K562 (cell line): ENCODE measurements at regions of chr19 and their contacts with region 1.

Region 1: DNA sequence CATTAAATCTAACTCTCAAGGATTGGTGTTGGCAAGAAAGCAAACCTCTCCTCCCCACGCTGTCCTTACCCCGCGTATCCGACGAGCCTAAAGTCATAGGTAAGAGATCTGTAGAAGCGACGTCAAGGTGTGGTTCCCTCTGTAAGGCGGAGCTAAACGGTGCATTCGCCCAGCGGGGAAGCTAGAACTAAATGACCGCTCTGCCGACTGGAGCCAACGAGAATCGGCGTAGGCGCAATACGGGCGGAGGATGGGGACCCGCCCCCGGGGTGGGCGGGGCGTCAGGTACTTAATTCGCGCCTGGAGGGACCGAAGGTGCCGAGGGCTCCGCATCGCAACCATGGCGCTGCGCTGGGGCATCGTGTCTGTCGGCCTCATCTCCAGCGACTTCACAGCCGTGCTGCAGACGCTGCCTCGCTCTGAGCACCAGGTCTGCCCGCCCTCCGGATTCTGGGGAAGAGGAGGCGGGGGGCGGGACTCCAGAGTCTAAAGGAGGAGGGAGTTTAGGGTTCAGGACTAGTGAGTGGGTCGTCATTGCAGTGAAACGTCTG is at the start of gene DHDH:
- DNase-seq: peak; percentile 91 to 96 (median 95)
- ATAC-seq: peak; percentile 97
- H3K4me3 ChIP-seq: peak within 1 kb of the TSS; percentile 38
- H3K27ac ChIP-seq: peak within 1 kb of the TSS; percentile 29; the same call in 2 of the 3 replicates
- H3K4me1 ChIP-seq: peaks cover 14 to 38% of the 10 kb centered on the region in 2 experiments; a peak in 4 of 5 replicates
- H3K27me3 ChIP-seq: no peaks in the 10 kb centered on the region
- CTCF ChIP-seq: no peak
- EP300 ChIP-seq: no peak
- POLR2A ChIP-seq: peak; percentile 63
- RAD21 ChIP-seq: no peak
- polyA plus RNA-seq, gene DHDH: 0.41 to 0.87 TPM

Region 2: GRCh38 chr19:48837051-48837524 is 96.4 kb before region 1 on chr19:
- CTCF ChIA-PET with region 1: no interaction called
- POLR2A ChIA-PET with region 1: no interaction called
- in situ Hi-C with region 1: no loop called
- intact Hi-C with region 1: no loop called
- DNase-seq: no peak
- ATAC-seq: no peak
- H3K4me3 ChIP-seq: no peak overlapping the region
- H3K27ac ChIP-seq: no peak overlapping the region
- H3K4me1 ChIP-seq: peaks cover 8 to 35% of the 10 kb centered on the region in 2 experiments
- H3K27me3 ChIP-seq: no peaks in the 10 kb centered on the region
- CTCF ChIP-seq: no peak
- EP300 ChIP-seq: no peak
- POLR2A ChIP-seq: no peak
- RAD21 ChIP-seq: no peak

Region 3: DNA sequence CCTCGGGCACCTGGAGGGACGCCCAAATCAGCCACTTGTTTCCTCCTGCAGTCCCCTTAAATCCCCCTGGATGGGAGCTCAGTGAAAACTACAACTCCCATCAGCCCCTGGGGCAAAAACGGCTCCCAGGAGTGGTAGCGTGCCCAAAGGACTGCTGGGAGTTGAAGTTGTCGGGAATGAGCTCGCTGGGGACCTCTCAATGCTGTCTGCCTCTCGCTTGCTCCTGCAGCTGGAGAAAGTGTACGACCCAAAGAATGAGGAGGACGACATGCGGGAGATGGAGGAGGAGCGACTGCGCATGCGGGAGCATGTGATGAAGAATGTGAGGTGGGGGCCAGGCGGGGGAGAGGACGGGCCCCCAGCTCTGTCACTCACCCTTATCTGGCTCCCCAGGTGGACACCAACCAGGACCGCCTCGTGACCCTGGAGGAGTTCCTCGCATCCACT is 14.6 kb before region 1 on chr19:
- CTCF ChIA-PET with region 1: no interaction called
- POLR2A ChIA-PET with region 1: interaction called, 19 read pairs
- in situ Hi-C with region 1: no loop called
- intact Hi-C with region 1: no loop called
- DNase-seq: peak; percentile 72 to 81 (median 78)
- ATAC-seq: peak; percentile 93
- H3K4me3 ChIP-seq: no peak overlapping the region
- H3K27ac ChIP-seq: no peak overlapping the region
- H3K4me1 ChIP-seq: peaks cover 0 to 13% of the 10 kb centered on the region in 2 experiments; a peak in 3 of 5 replicates
- H3K27me3 ChIP-seq: no peaks in the 10 kb centered on the region
- CTCF ChIP-seq: no peak
- EP300 ChIP-seq: 0 out of 2 replicates have a peak, but pooled peaks have one; percentile 26
- POLR2A ChIP-seq: no peak
- RAD21 ChIP-seq: no peak

Region 4: DNA sequence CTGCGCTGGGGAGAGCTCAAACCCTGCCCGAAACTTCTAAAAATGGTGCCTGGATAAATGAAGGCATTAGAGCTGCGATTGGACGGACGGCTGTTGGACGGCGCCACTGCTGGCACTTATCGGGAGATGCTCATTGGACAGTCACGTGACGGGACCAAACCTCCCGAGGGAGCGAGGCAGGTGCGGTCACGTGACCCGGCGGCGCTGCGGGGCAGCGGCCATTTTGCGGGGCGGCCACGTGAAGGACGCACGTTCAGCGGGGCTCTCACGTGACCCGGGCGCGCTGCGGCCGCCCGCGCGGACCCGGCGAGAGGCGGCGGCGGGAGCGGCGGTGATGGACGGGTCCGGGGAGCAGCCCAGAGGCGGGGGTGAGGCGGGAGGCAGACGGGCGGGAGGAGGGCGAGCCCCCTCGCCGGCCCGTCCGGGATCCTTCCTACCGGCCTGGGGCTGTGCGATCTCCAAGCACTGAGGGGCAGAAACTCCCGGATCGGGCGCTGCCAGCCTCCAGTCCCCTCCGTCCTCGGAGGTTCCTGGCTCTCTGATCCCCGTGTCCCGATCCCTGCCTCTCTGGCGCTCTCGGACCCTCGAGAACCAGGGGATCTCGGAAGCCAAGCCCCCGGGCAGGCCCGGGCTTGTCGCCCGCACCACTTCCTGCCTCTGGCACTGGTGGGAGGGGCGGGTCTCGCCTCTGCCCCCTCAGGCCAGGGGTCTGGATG is 21.3 kb after region 1 on chr19 and contains the start of gene BAX:
- CTCF ChIA-PET with region 1: no interaction called
- POLR2A ChIA-PET with region 1: interaction called, 5 read pairs
- in situ Hi-C with region 1: no loop called
- intact Hi-C with region 1: loop called (anchors 2 kb)
- DNase-seq: peak; percentile 95 to 100 (median 97)
- ATAC-seq: peak; percentile 92
- H3K4me3 ChIP-seq: peak within 1 kb of the TSS; percentile 79
- H3K27ac ChIP-seq: peak within 1 kb of the TSS; percentile 77
- H3K4me1 ChIP-seq: peaks cover 31 to 38% of the 10 kb centered on the region in 2 experiments; a peak in 4 of 5 replicates
- H3K27me3 ChIP-seq: no peaks in the 10 kb centered on the region
- CTCF ChIP-seq: peak in 2 of 3 experiments; percentile 13 to 33; a peak in 2 of 6 replicates
- EP300 ChIP-seq: peak; percentile 38; the same call in 1 of the 2 replicates
- POLR2A ChIP-seq: peak; percentile 68
- RAD21 ChIP-seq: peak; percentile 4 to 34; a peak in 2 of 4 replicates
- polyA plus RNA-seq, gene BAX: 3.2 to 5.5 TPM